HEK293 (cell line): ENCODE measurements at regions of chrX and their contacts with region 1.

Region 1: GRCh38 chrX:137151403-137151802 is 117.6 kb upstream of the GPR101 start:
- H3K4me3 ChIP-seq: no peak overlapping the region
- H3K27ac ChIP-seq: no peak overlapping the region
- H3K4me1 ChIP-seq: no peaks in the 10 kb centered on the region
- CTCF ChIP-seq: no peak

Region 2: GRCh38 chrX:136652822-136653723 is 498.3 kb before region 1 on chrX:
- CTCF ChIA-PET with region 1: no interaction called
- POLR2A ChIA-PET with region 1: no interaction called
- H3K4me3 ChIP-seq: no peak overlapping the region
- H3K27ac ChIP-seq: no peak overlapping the region
- H3K4me1 ChIP-seq: no peaks in the 10 kb centered on the region
- CTCF ChIP-seq: no peak

Region 3: GRCh38 chrX:137118136-137118535 is 33.3 kb before region 1 on chrX:
- CTCF ChIA-PET with region 1: no interaction called
- POLR2A ChIA-PET with region 1: no interaction called
- H3K4me3 ChIP-seq: no peak overlapping the region
- H3K27ac ChIP-seq: no peak overlapping the region
- H3K4me1 ChIP-seq: no peaks in the 10 kb centered on the region
- CTCF ChIP-seq: no peak

Region 4: GRCh38 chrX:137166591-137166990 is 15.2 kb after region 1 on chrX:
- CTCF ChIA-PET with region 1: interaction called, 18 read pairs
- POLR2A ChIA-PET with region 1: no interaction called
- H3K4me3 ChIP-seq: no peak overlapping the region
- H3K27ac ChIP-seq: no peak overlapping the region
- H3K4me1 ChIP-seq: no peaks in the 10 kb centered on the region
- CTCF ChIP-seq: no peak